A549 (cell line): ENCODE measurements at regions of chr11 and their contacts with region 1.

Region 1: DNA sequence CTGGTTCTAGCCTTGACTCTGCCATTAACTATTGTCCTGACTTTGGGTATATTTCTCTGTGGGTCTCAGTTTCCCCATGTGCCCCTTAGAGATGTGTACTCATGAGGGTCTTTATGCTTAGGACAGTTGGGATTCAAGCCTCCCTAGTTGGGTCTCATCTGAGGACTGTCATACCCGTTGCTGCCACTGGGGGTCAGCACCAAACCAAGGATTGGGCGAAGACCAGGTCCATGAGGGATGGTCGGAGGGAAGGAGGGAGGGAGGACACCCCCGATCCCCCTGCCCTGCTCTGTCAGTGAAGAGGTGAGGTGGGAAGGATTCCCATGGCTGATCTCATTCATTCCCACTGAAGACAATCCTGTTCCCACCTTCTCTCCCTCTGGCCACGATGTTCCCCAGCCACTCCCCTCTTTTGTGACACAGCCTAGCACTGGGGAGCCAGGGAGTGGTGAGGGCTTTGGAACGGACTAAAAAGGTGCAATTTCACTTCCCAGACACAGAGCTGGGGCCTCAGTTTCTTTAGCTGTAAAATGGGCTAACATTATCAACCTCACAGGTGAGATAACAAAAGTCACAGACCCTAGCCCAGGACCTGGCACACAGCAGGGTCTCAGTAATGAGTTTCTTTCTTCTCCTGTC is 12.4 kb upstream of the KLHL35 start:
- DNase-seq: peak; percentile 52 to 83
- ATAC-seq: peak; percentile 68 to 89
- H3K4me3 ChIP-seq: no peak overlapping the region
- H3K27ac ChIP-seq: no peak overlapping the region
- H3K4me1 ChIP-seq: no peaks in the 10 kb centered on the region
- CTCF ChIP-seq: peak; percentile 94
- EP300 ChIP-seq: no peak
- POLR2A ChIP-seq: no peak
- RAD21 ChIP-seq: peak; percentile 99

Region 2: GRCh38 chr11:75182669-75183068 is 262.8 kb before region 1 on chr11:
- CTCF ChIA-PET with region 1: no interaction called
- POLR2A ChIA-PET with region 1: no interaction called
- DNase-seq: no peak
- ATAC-seq: no peak
- H3K4me3 ChIP-seq: no peak overlapping the region
- H3K27ac ChIP-seq: no peak overlapping the region
- H3K4me1 ChIP-seq: no peaks in the 10 kb centered on the region
- CTCF ChIP-seq: no peak
- EP300 ChIP-seq: no peak
- POLR2A ChIP-seq: no peak
- RAD21 ChIP-seq: no peak

Region 3: GRCh38 chr11:75371941-75372789 is 73.3 kb before region 1 on chr11:
- CTCF ChIA-PET with region 1: no interaction called
- POLR2A ChIA-PET with region 1: no interaction called
- DNase-seq: peak; percentile 73 to 96
- ATAC-seq: peak; percentile 95 to 97
- H3K4me3 ChIP-seq: peak overlapping the region; percentile 12; the same call in 1 of the 3 replicates
- H3K27ac ChIP-seq: peak overlapping the region; percentile 72 to 84
- H3K4me1 ChIP-seq: peaks cover 19% of the 10 kb centered on the region
- CTCF ChIP-seq: no peak
- EP300 ChIP-seq: peak; percentile 43 to 58; a peak in 2 of 5 replicates
- POLR2A ChIP-seq: no peak
- RAD21 ChIP-seq: peak in 1 of 2 experiments; percentile 21; a peak in 1 of 5 replicates

Region 4: GRCh38 chr11:75428281-75428724 is 17.1 kb before region 1 on chr11:
- CTCF ChIA-PET with region 1: interaction called, 99 read pairs
- POLR2A ChIA-PET with region 1: no interaction called
- DNase-seq: no peak
- ATAC-seq: no peak
- H3K4me3 ChIP-seq: no peak overlapping the region
- H3K27ac ChIP-seq: no peak overlapping the region
- H3K4me1 ChIP-seq: peaks cover 16% of the 10 kb centered on the region
- CTCF ChIP-seq: no peak
- EP300 ChIP-seq: no peak
- POLR2A ChIP-seq: no peak
- RAD21 ChIP-seq: no peak

Region 5: DNA sequence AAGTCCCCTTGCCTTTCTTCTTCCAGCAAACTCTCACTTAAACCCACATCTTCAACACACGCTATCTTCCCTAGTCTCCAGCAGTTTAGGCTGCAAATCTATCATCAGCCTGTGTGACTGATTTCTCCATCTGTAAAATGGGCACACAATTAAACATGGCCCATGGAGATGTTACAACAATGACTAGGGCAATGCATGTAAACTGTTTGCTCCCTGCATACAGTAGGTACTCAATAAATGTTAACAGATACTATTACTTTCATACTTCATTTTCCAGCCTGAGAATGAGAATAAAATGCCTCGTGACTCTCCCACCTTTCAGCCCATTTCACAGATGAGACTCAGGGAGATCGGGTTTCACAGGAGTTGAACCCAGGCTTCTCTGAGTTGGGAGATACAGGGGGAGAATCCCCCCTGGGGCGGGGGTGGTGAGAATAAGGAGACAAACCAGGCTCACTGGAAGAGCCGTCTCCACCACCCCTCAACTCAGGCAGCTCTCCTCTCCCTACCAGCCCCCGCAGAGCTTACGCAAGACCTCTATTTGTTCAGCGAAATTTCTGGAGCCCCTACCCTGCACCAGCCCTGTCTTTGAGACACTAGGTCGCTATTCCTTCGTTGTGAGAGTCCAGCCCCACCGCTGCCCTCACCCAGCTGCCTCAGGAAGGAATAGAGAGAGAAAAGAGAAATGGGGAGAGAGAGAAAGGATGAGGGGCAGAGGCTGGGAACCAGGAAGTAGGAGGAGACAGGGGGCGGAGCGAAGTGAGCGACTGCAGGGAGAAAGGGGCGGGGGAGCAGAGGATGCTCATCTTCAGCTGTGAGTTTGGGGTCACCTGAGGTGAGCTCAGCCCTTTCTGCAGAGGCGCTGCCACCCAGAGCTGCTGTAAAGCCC is 29.7 kb after region 1 on chr11:
- CTCF ChIA-PET with region 1: interaction called, 27 read pairs
- POLR2A ChIA-PET with region 1: no interaction called
- DNase-seq: peak in 1 of 2 experiments; percentile 32
- ATAC-seq: peak in 1 of 2 experiments; percentile 50; a peak in 3 of 6 replicates
- H3K4me3 ChIP-seq: no peak overlapping the region
- H3K27ac ChIP-seq: peak overlapping the region in 1 of 2 experiments; percentile 62; a peak in 3 of 6 replicates
- H3K4me1 ChIP-seq: peaks cover 13% of the 10 kb centered on the region
- CTCF ChIP-seq: no peak
- EP300 ChIP-seq: no peak
- POLR2A ChIP-seq: no peak
- RAD21 ChIP-seq: no peak

Region 6: DNA sequence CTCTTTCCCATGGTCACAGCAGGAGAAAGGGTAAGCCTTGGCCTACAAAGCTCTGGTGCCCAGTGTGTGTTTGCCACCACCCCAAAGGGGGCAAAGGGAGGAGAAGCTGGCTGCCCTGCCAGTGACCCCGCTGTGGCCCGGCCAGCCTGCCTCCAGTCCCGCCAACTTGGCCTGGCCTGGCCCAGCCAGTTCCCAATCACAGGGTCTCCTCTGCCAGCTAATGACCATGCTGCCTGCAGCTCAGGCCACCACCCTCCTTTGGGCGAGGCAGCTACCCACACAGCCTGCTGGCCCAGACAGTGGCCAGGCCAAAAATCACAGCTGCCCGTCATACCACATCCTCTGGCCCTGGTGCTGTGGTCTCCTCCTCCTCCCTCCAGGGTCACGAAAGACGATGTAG is 75.3 kb after region 1 on chr11:
- CTCF ChIA-PET with region 1: interaction called, 432 read pairs
- POLR2A ChIA-PET with region 1: no interaction called
- DNase-seq: no peak
- ATAC-seq: no peak
- H3K4me3 ChIP-seq: no peak overlapping the region
- H3K27ac ChIP-seq: no peak overlapping the region
- H3K4me1 ChIP-seq: peaks cover 11% of the 10 kb centered on the region
- CTCF ChIP-seq: no peak
- EP300 ChIP-seq: no peak
- POLR2A ChIP-seq: no peak
- RAD21 ChIP-seq: no peak

Region 7: DNA sequence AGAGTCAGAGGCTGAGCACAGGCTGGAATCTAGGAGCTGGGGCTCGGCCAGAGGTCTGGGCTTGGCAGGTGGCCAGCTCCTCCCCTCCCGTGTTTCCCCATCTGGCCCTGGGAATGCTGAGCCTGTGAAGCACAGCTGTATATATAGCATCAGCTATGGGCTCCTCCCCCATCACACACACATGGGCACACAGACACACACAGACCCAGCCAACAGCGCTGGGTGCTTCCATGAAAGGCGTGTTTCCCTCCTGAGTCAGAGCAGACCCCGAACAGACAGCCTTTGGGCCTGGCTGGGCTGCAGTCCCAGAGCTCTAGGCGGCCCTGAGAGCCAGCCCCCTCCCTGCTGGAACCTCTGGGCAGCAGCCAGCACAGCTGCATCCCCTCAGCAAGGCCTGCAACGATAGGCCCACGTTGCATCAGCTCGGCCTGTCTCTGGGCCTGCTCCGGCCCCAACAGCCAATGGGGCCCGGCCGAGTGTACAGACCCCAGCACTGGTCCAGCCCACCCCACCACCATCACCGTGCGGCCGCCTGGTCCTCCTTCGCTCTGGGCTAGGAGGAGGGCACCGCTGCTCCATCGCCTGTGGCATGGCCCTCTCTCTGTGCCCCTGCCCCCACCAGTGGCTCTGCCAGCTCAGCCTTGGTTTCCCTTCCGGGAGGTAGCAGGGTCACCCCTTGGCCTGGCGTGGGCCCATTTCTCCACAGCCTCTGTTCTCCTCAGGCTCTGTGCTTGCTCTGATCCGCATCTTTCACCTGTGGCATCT is 109.0 kb after region 1 on chr11:
- CTCF ChIA-PET with region 1: interaction called, 13 read pairs
- POLR2A ChIA-PET with region 1: no interaction called
- DNase-seq: no peak
- ATAC-seq: peak in 1 of 2 experiments; percentile 12; a peak in 3 of 6 replicates
- H3K4me3 ChIP-seq: no peak overlapping the region
- H3K27ac ChIP-seq: peak overlapping the region in 1 of 2 experiments; percentile 78; a peak in 4 of 6 replicates
- H3K4me1 ChIP-seq: peaks cover 28% of the 10 kb centered on the region
- CTCF ChIP-seq: no peak
- EP300 ChIP-seq: no peak
- POLR2A ChIP-seq: no peak
- RAD21 ChIP-seq: no peak

Region 8: GRCh38 chr11:75777461-75778110 is 332.2 kb after region 1 on chr11:
- CTCF ChIA-PET with region 1: no interaction called
- POLR2A ChIA-PET with region 1: no interaction called
- DNase-seq: no peak
- ATAC-seq: no peak
- H3K4me3 ChIP-seq: no peak overlapping the region
- H3K27ac ChIP-seq: no peak overlapping the region
- H3K4me1 ChIP-seq: no peaks in the 10 kb centered on the region
- CTCF ChIP-seq: no peak
- EP300 ChIP-seq: no peak
- POLR2A ChIP-seq: no peak
- RAD21 ChIP-seq: no peak